Activated CD8-positive, alpha-beta T cell treated with anti-CD3 and anti-CD28 coated beads for 36 hours (primary cell): ENCODE measurements at regions of chr15 and their contacts with region 1.

Region 1: DNA sequence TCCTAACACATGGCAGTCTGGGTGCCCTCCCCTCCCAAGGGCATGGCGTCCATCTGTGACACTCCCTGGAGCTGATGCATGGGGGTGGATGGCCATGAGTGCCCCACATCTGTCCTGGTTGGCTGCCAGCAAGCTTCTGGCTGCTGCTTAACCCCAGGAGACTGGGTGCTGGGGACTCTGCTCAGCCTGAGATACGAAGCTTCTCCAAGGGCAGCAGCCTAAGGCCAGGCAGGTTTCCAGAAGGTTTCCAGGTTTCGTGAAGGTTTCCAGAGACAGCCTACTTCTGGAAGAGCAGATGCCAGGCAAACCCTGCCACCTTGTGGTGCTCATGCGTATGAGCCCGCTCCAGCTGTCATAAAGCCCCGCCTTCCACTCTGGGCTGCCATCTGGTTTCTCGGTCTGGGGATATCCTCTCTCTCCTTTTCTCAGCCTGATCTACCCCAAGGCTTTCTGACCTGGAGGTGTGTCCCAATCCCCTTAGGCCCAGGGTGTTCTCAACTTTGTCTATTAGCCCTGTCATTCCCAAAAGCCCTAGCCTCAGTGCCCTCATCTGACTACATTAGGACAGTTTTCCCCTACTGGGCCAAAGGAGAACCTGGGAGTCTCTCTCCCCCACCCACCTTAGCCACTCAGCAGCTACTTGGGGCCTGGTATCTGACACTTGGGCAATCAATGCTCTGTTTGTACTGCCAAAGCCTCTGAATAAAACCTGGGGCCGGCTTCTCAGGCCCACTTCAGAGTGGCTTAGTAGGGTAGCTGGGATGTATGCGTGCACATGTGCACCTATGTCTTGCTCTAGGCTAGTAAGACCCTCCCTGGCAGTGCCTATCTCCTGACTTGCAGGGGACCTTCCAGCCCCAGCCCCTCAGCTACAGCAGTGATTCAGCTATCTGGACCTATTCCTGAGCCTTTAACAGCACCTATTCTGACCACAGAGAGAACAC is 12.0 kb downstream of the MRPL46 start:
- DNase-seq: peak; percentile 67
- ATAC-seq: peak; percentile 89
- H3K4me3 Mint-ChIP-seq: no peak overlapping the region
- H3K27ac Mint-ChIP-seq: no peak overlapping the region
- H3K4me1 Mint-ChIP-seq: peaks cover under 1% of the 10 kb centered on the region
- H3K27me3 Mint-ChIP-seq: no peaks in the 10 kb centered on the region
- CTCF ChIP-seq: peak; percentile 67

Region 2: GRCh38 chr15:88365124-88365523 is 90.0 kb before region 1 on chr15:
- CTCF ChIA-PET with region 1: no interaction called
- POLR2A ChIA-PET with region 1: no interaction called
- intact Hi-C with region 1: no loop called
- DNase-seq: no peak
- ATAC-seq: no peak
- H3K4me3 Mint-ChIP-seq: no peak overlapping the region
- H3K27ac Mint-ChIP-seq: no peak overlapping the region
- H3K4me1 Mint-ChIP-seq: no peaks in the 10 kb centered on the region
- H3K27me3 Mint-ChIP-seq: no peaks in the 10 kb centered on the region
- CTCF ChIP-seq: no peak

Region 3: DNA sequence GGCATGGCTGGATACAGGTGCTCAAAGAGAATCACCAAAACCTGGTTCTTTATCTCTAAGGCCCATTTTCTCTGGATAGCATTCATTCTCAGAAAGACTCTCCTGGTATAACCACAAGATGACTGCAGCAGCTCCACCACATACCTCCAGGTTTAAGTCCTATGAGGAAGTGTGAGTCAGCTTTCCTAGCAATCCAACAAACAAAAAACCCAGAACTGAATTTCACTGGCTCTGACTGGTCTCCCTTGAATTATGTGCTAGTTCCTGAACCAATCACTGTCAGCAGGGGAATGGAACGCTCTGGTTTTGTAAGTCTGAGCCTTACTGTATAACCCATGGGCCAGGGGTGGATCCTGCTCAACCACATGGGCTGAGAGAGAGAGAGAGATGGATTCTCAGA is 15.1 kb before region 1 on chr15:
- CTCF ChIA-PET with region 1: interaction called, 28 read pairs
- POLR2A ChIA-PET with region 1: interaction called, 4 read pairs
- intact Hi-C with region 1: no loop called
- DNase-seq: no peak
- ATAC-seq: no peak
- H3K4me3 Mint-ChIP-seq: no peak overlapping the region
- H3K27ac Mint-ChIP-seq: no peak overlapping the region
- H3K4me1 Mint-ChIP-seq: no peaks in the 10 kb centered on the region
- H3K27me3 Mint-ChIP-seq: peaks cover 16% of the 10 kb centered on the region
- CTCF ChIP-seq: no peak

Region 4: GRCh38 chr15:88467073-88467934 is 12.2 kb after region 1 on chr15 and contains the starts of genes MRPL46 and MRPS11:
- CTCF ChIA-PET with region 1: interaction called, 17 read pairs
- POLR2A ChIA-PET with region 1: interaction called, 12 read pairs
- intact Hi-C with region 1: no loop called
- DNase-seq: peak; percentile 92
- ATAC-seq: peak; percentile 90
- H3K4me3 Mint-ChIP-seq: peak within 1 kb of the TSS; percentile 90
- H3K27ac Mint-ChIP-seq: peak within 1 kb of the TSS; percentile 99
- H3K4me1 Mint-ChIP-seq: peaks cover 34% of the 10 kb centered on the region
- H3K27me3 Mint-ChIP-seq: no peaks in the 10 kb centered on the region
- CTCF ChIP-seq: no peak
- total RNA-seq, gene MRPL46: 34.4 to 35.0 TPM
- total RNA-seq, gene MRPS11: 54.3 to 55.4 TPM